ENCODE measurements at regions of chr11 and their contacts with region 1.

Region 1: GRCh38 chr11:84384731-84385130 is 1098.6 kb upstream of the CCDC90B start:
- DNase-seq: no peak
- H3K4me3 ChIP-seq: no peak overlapping the region
- H3K27ac ChIP-seq: no peak overlapping the region
- H3K4me1 ChIP-seq: no peaks in the 10 kb centered on the region
- H3K27me3 ChIP-seq: no peaks in the 10 kb centered on the region
- CTCF ChIP-seq: peak; percentile 6 to 76 (median 59)

Region 2: GRCh38 chr11:84524422-84525051 is 139.8 kb after region 1 on chr11:
- intact Hi-C with region 1: loop called (anchors 5 kb)
- DNase-seq: no peak
- H3K4me3 ChIP-seq: no peak overlapping the region
- H3K27ac ChIP-seq: no peak overlapping the region
- H3K4me1 ChIP-seq: no peaks in the 10 kb centered on the region
- H3K27me3 ChIP-seq: no peaks in the 10 kb centered on the region
- CTCF ChIP-seq: peak in 1 of 3 experiments; percentile 42

Measured in ascending aorta (tissue), 2 donors.